CD4-positive, alpha-beta memory T cell (primary cell): ENCODE measurements at regions of chr5 and their contacts with region 1.

Region 1: DNA sequence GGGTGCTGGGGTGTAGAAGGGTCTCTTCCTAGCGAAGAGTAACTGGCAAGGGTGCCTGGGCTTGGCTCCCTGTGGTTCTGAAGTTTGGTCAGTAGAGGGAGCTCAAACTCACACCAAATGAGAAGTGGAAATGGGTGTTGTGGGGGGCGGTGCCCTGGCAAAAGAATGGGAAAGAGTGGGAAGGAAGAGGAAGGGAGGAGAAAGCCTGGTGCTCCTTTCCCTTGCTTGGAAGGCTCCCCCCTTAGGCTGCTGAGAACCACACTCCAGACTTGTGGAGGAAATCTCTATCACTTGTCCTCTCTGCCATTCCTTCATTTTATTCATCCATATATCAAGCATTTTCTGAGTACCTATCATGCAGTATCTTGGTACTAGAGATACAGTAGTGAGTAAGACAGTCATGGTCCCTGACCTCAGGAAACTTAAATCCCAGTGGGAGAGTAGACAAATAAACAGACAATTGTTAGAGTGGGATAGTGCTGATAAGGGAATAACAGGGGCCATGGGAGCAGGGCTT is 13.0 kb downstream of the SLC4A9 start:
- DNase-seq: peak in 4 of 5 donors; percentile 22 to 38 (median 31)
- H3K4me3 ChIP-seq: no peak overlapping the region
- H3K4me3 Mint-ChIP-seq: no peak overlapping the region
- H3K27ac ChIP-seq: no peak overlapping the region
- H3K27ac Mint-ChIP-seq: peak overlapping the region in 1 of 7 donors; percentile 27
- H3K4me1 ChIP-seq: no peaks in the 10 kb centered on the region
- H3K4me1 Mint-ChIP-seq: peaks cover 0 to 7% (median 3%) of the 10 kb centered on the region in 4 donors
- H3K27me3 ChIP-seq: no peaks in the 10 kb centered on the region
- H3K27me3 Mint-ChIP-seq: no peaks in the 10 kb centered on the region

Region 2: GRCh38 chr5:140346348-140347101 is 26.5 kb before region 1 on chr5 and contains the start of gene HBEGF:
- CTCF ChIA-PET with region 1: interaction called, 14 read pairs
- POLR2A ChIA-PET with region 1: no interaction called
- intact Hi-C with region 1: no loop called
- DNase-seq: peak; percentile 26 to 61 (median 38)
- H3K4me3 ChIP-seq: peak within 1 kb of the TSS in 1 of 2 donors; percentile 28
- H3K4me3 Mint-ChIP-seq: peak within 1 kb of the TSS; percentile 72 to 91 (median 86)
- H3K27ac ChIP-seq: peak within 1 kb of the TSS; percentile 27
- H3K27ac Mint-ChIP-seq: peak within 1 kb of the TSS in 6 of 7 donors; percentile 43 to 79 (median 76)
- H3K4me1 ChIP-seq: peaks cover 43% of the 10 kb centered on the region
- H3K4me1 Mint-ChIP-seq: peaks cover 27 to 53% (median 35%) of the 10 kb centered on the region in 4 donors
- H3K27me3 ChIP-seq: no peaks in the 10 kb centered on the region
- H3K27me3 Mint-ChIP-seq: peaks cover 1 to 4% of the 10 kb centered on the region in 2 donors
- total RNA-seq, gene HBEGF: 0.52 to 0.86 TPM

Region 3: GRCh38 chr5:140388052-140388451 is 15.0 kb after region 1 on chr5:
- CTCF ChIA-PET with region 1: interaction called, 28 read pairs
- POLR2A ChIA-PET with region 1: no interaction called
- intact Hi-C with region 1: no loop called
- DNase-seq: no peak
- H3K4me3 ChIP-seq: no peak overlapping the region
- H3K4me3 Mint-ChIP-seq: no peak overlapping the region
- H3K27ac ChIP-seq: no peak overlapping the region
- H3K27ac Mint-ChIP-seq: no peak overlapping the region
- H3K4me1 ChIP-seq: no peaks in the 10 kb centered on the region
- H3K4me1 Mint-ChIP-seq: peaks cover 2 to 5% (median 4%) of the 10 kb centered on the region in 4 donors
- H3K27me3 ChIP-seq: no peaks in the 10 kb centered on the region
- H3K27me3 Mint-ChIP-seq: no peaks in the 10 kb centered on the region

Region 4: GRCh38 chr5:140632150-140633020 is 259.4 kb after region 1 on chr5:
- CTCF ChIA-PET with region 1: interaction called, 19 read pairs
- POLR2A ChIA-PET with region 1: no interaction called
- intact Hi-C with region 1: loop called (anchors 1 kb)
- DNase-seq: peak; percentile 50 to 66 (median 55)
- H3K4me3 ChIP-seq: peak overlapping the region; percentile 61 to 73
- H3K4me3 Mint-ChIP-seq: peak overlapping the region; percentile 90 to 96 (median 90)
- H3K27ac ChIP-seq: peak overlapping the region; percentile 41
- H3K27ac Mint-ChIP-seq: peak overlapping the region; percentile 68 to 93 (median 89)
- H3K4me1 ChIP-seq: peaks cover 13% of the 10 kb centered on the region
- H3K4me1 Mint-ChIP-seq: peaks cover 10 to 30% (median 20%) of the 10 kb centered on the region in 4 donors
- H3K27me3 ChIP-seq: no peaks in the 10 kb centered on the region
- H3K27me3 Mint-ChIP-seq: peaks cover 0 to 2% of the 10 kb centered on the region in 2 donors

Region 5: DNA sequence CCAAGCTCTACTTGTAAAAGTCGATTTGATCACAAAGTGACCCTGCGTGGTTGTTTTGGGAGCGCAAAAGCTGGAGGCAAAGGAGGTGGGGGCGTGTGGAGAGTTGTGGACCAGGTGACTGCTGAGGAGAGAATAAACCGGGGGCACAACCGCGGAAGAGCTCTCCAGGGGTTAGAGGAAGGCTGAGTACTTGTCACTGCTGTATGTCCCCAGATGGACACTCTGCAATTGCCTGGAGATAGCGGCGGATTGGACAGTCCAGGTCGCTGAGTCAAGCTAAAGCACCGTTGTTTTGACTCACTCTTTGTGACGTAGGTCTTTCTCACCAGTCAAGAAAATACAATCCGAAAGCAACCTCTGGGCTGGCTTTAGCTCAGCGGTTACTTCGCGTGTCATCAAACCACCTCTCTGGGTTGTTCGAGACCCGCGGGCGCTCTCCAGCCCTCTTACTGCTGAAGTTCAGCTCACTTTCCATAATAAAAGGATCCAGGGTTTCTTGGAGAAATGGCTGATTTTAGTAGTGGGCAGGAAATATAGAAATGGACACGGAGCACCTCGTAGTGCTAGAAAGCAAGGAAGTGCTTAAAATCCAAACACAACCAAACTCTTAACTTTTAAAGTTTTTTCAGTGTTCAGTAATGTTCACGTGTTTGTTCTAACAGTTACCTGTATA is 352.9 kb after region 1 on chr5:
- CTCF ChIA-PET with region 1: interaction called, 89 read pairs
- POLR2A ChIA-PET with region 1: no interaction called
- intact Hi-C with region 1: no loop called
- DNase-seq: peak; percentile 61 to 88 (median 63)
- H3K4me3 ChIP-seq: peak overlapping the region; percentile 39 to 42
- H3K4me3 Mint-ChIP-seq: peak overlapping the region; percentile 75 to 90 (median 81)
- H3K27ac ChIP-seq: no peak overlapping the region
- H3K27ac Mint-ChIP-seq: peak overlapping the region; percentile 37 to 99 (median 74)
- H3K4me1 ChIP-seq: peaks cover 6% of the 10 kb centered on the region
- H3K4me1 Mint-ChIP-seq: peaks cover 9 to 25% (median 17%) of the 10 kb centered on the region in 4 donors
- H3K27me3 ChIP-seq: no peaks in the 10 kb centered on the region
- H3K27me3 Mint-ChIP-seq: peaks cover 3 to 11% of the 10 kb centered on the region in 2 donors